ENCODE measurements at regions of chr16 and their contacts with region 1.

Region 1: GRCh38 chr16:1863681-1864460 is 8.1 kb downstream of the MEIOB start:
- DNase-seq: peak; percentile 4
- H3K4me3 ChIP-seq: no peak overlapping the region
- CTCF ChIP-seq: peak; percentile 24

Region 2: GRCh38 chr16:1845985-1846384 is 17.9 kb before region 1 on chr16:
- CTCF ChIA-PET with region 1: interaction called, 11 read pairs
- POLR2A ChIA-PET with region 1: no interaction called
- DNase-seq: no peak
- H3K4me3 ChIP-seq: no peak overlapping the region
- CTCF ChIP-seq: no peak

Region 3: DNA sequence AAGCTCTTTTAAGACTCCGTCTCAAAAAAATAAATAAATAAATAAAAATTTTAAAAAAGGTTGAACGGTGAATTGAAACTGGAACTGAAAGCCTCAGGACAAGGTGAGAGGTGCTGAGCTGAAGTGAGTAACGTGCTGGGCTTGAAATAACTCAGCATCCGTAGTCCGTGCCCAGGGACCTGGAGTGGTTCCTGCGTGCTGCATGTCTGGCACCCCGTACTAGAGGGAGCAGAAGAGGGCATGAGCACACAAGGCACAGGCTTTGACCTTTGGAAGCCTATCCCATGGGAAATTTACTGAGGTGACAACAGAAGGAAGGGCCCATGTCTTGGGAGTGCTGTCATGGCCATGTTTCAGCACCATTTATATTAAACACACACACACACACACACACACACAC is 12.6 kb after region 1 on chr16:
- CTCF ChIA-PET with region 1: interaction called, 10 read pairs
- POLR2A ChIA-PET with region 1: no interaction called
- DNase-seq: no peak
- H3K4me3 ChIP-seq: no peak overlapping the region
- CTCF ChIP-seq: no peak

Region 4: GRCh38 chr16:1959269-1960049 is 95.6 kb after region 1 on chr16 and contains the start of gene NDUFB10:
- CTCF ChIA-PET with region 1: interaction called, 11 read pairs
- POLR2A ChIA-PET with region 1: interaction called, 4 read pairs
- DNase-seq: peak; percentile 16
- H3K4me3 ChIP-seq: peak within 1 kb of the TSS; percentile 86
- CTCF ChIP-seq: peak; percentile 65